Common myeloid progenitor, CD34-positive (primary cell): ENCODE measurements at regions of chr14 and their contacts with region 1.

Region 1: DNA sequence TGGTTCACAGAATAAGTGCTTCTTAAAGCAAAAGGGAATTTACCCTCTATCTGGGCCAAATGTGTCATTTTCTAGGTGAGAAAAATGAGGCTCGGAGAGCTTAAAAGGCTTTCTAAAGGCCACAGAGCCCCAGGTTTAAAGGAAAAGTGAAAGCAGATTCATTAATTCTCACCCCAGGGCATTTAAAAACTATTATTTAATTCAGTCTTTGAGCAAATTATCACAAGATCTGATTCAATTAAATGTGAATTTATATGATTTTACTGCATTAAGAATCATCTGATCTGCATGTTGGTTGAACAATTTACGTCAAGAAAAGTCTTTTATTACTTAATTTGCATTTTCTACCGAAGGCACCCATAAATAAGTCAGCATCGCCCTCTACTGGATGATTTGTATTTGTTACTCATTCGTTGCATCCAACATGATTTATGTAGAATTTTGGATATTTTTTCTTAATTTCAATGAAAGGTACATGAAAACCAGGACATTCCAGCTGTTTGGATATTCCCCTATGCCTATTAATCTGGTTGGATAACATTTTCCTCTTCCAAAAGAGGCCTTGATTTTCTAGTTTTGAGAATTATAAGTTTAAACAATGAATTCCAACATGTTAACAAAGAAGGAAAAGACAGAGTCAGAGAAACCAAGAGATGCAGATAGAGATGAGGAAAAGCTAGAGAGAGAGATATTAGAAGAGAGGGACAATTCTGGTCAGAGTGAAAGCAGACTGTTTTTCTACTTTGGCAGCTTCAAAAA is 19.1 kb upstream of the DHRS7 start:
- DNase-seq: peak; percentile 80 to 89 (median 86)
- H3K4me3 ChIP-seq: peak overlapping the region in 6 of 7 experiments; percentile 50 to 79 (median 69)
- H3K27ac ChIP-seq: peak overlapping the region; percentile 52 to 79
- H3K4me1 ChIP-seq: peaks cover 0 to 7% (median 3%) of the 10 kb centered on the region in 4 experiments
- H3K27me3 ChIP-seq: no peaks in the 10 kb centered on the region

Region 2: GRCh38 chr14:59632381-59632780 is 551.9 kb before region 1 on chr14:
- CTCF ChIA-PET with region 1: interaction called, 14 read pairs
- POLR2A ChIA-PET with region 1: no interaction called
- DNase-seq: peak; percentile 31 to 59 (median 52)
- H3K4me3 ChIP-seq: no peak overlapping the region
- H3K27ac ChIP-seq: no peak overlapping the region
- H3K4me1 ChIP-seq: peaks cover 0 to 12% (median 10%) of the 10 kb centered on the region in 4 experiments
- H3K27me3 ChIP-seq: peaks cover 10 to 30% (median 23%) of the 10 kb centered on the region in 5 experiments

Region 3: DNA sequence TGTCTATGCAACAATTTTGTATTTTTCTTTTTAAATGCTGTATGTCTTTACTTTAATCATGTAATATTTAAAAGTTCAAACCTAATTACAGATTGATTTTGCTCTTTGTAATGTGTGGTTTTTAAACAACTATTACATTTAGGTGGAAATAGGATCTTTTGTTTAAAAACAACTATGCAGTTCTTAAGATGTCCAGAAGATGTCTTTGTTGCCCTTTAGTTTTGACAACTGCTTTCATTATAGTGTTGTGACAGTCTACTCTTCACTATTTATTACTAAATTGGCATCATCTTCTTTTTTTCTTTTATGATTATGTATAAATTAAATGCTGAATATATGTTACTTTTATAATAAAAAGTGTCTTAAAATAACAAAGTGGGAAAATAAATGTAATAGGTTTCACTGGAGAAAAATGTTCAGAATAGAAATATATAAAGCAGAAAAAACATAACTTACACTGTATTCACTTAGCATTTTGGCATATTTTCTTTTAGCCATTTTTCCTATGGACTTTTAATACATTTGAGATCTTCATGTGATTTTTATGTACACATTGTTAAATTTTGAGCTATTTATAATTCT is 119.7 kb before region 1 on chr14:
- CTCF ChIA-PET with region 1: interaction called, 124 read pairs
- POLR2A ChIA-PET with region 1: no interaction called
- DNase-seq: peak; percentile 48 to 59 (median 53)
- H3K4me3 ChIP-seq: no peak overlapping the region
- H3K27ac ChIP-seq: no peak overlapping the region
- H3K4me1 ChIP-seq: no peaks in the 10 kb centered on the region
- H3K27me3 ChIP-seq: no peaks in the 10 kb centered on the region

Region 4: GRCh38 chr14:60164712-60165546 is 19.4 kb before region 1 on chr14 and contains the start of gene DHRS7:
- CTCF ChIA-PET with region 1: interaction called, 12 read pairs
- POLR2A ChIA-PET with region 1: no interaction called
- DNase-seq: peak; percentile 83 to 89 (median 83)
- H3K4me3 ChIP-seq: peak within 1 kb of the TSS; percentile 69 to 99 (median 94)
- H3K27ac ChIP-seq: peak within 1 kb of the TSS; percentile 84 to 93
- H3K4me1 ChIP-seq: peaks cover 4 to 22% (median 14%) of the 10 kb centered on the region in 4 experiments
- H3K27me3 ChIP-seq: no peaks in the 10 kb centered on the region

Region 5: DNA sequence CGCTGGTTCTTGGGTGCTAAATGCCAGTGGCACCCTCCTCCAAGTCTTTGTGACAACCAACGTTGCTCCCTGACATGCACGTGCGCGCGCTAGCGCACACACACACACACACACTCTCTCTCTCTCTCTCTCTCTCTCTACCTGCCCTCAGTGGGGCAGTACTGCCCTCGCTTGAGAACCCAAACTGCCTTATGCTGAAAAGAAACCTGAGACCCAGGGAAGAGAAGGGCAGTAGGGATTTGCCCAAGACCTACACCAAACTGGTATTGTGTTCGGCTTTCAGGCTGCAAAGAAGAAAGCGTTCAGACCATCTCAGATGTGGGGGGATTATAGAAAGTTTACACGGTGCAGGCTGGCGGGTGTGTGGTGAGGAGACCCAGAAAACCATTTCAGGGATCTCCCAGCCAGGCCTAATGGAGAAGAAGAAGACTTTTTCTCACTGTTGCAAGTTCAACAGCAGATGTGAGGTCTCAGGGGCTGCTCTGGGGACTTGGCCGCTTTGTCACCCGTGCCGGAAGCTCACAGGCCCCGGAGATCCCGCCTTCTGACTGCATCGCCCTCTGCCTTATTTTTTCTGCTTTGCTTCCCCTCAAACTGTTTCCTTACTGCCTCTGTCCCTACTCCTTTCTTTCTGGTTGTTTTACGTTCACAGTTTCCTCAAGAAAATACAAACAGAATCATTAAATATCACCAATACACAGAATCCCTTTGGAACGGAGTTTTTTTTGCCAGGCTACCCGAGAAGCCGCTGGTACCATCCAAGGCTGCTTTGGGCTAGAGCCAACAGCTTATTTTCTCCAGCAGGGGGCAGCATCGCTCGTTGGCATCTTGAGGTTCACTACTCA is 147.1 kb after region 1 on chr14:
- CTCF ChIA-PET with region 1: interaction called, 10 read pairs
- POLR2A ChIA-PET with region 1: no interaction called
- DNase-seq: peak; percentile 82 to 92 (median 89)
- H3K4me3 ChIP-seq: peak overlapping the region; percentile 56 to 91 (median 71)
- H3K27ac ChIP-seq: peak overlapping the region in 1 of 2 experiments; percentile 59
- H3K4me1 ChIP-seq: peaks cover 7 to 28% (median 20%) of the 10 kb centered on the region in 4 experiments
- H3K27me3 ChIP-seq: peaks cover 0 to 9% (median 4%) of the 10 kb centered on the region in 5 experiments